GM12878 (cell line): ENCODE measurements at regions of chr2 and their contacts with region 1.

Region 1: GRCh38 chr2:26745609-26746327 is 18.3 kb upstream of the SLC35F6 start:
- DNase-seq: no peak
- ATAC-seq: peak; percentile 97
- H3K4me3 ChIP-seq: no peak overlapping the region
- H3K27ac ChIP-seq: no peak overlapping the region
- H3K4me1 ChIP-seq: no peaks in the 10 kb centered on the region; the same call in 1 of the 2 replicates
- H3K27me3 ChIP-seq: no peaks in the 10 kb centered on the region
- CTCF ChIP-seq: peak; percentile 90 to 94 (median 93)
- EP300 ChIP-seq: no peak
- POLR2A ChIP-seq: no peak
- RAD21 ChIP-seq: peak; percentile 92

Region 2: GRCh38 chr2:26503231-26503880 is 242.4 kb before region 1 on chr2:
- CTCF ChIA-PET with region 1: interaction called, 5 read pairs
- POLR2A ChIA-PET with region 1: no interaction called
- RAD21 ChIA-PET with region 1: no interaction called
- SMC1A ChIA-PET with region 1: no interaction called
- in situ Hi-C with region 1: no loop called
- intact Hi-C with region 1: loop called (anchors 10 kb)
- DNase-seq: no peak
- ATAC-seq: peak; percentile 98
- H3K4me3 ChIP-seq: peak overlapping the region; percentile 42; the same call in 1 of the 2 replicates
- H3K27ac ChIP-seq: no peak overlapping the region
- H3K4me1 ChIP-seq: no peaks in the 10 kb centered on the region; the same call in 1 of the 2 replicates
- H3K27me3 ChIP-seq: peaks cover 0 to 7% of the 10 kb centered on the region in 2 experiments; a peak in 3 of 4 replicates
- CTCF ChIP-seq: peak; percentile 75 to 88 (median 88)
- EP300 ChIP-seq: no peak
- POLR2A ChIP-seq: peak; percentile 48; the same call in 1 of the 2 replicates
- RAD21 ChIP-seq: peak; percentile 11; the same call in 1 of the 2 replicates

Region 3: DNA sequence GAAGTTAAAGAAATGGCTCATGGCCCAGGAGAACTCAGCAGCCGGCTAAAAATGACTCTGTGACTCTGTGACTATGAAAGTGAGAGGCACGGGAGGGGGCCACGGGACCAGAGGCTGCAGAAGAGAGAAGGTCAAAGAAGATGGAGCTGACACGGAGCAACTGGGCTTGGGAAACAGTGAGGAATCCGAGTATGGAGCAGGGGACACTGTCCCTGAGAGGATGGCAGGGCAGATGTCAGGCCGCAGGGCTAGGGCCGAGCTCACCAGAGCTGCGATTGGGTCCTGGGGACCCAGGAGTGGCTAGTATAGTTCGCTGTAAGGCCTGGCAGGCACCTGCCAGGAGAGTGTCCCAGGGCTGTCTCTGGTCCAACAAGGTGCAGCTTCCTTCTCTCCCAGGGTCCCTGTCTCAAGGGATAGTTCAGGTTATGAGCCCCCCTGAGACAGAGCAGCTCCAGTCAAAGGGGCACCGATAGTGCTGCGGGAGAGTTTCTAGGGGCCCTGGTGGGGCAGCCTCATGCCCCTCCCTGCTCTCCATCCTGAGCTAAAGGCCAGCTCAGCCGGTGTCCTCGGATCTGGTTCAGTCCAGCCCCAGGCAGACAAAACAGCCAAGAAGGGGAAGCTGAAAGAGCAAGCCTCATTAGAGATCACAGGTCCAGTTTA is 147.3 kb before region 1 on chr2:
- CTCF ChIA-PET with region 1: interaction called, 156 read pairs
- POLR2A ChIA-PET with region 1: no interaction called
- RAD21 ChIA-PET with region 1: interaction called, 11 read pairs
- SMC1A ChIA-PET with region 1: interaction called, 53 read pairs
- in situ Hi-C with region 1: loop called (anchors 5 kb)
- intact Hi-C with region 1: no loop called
- DNase-seq: no peak
- ATAC-seq: no peak
- H3K4me3 ChIP-seq: no peak overlapping the region
- H3K27ac ChIP-seq: no peak overlapping the region
- H3K4me1 ChIP-seq: no peaks in the 10 kb centered on the region
- H3K27me3 ChIP-seq: peaks cover 0 to 15% of the 10 kb centered on the region in 2 experiments
- CTCF ChIP-seq: no peak
- EP300 ChIP-seq: no peak
- POLR2A ChIP-seq: no peak
- RAD21 ChIP-seq: no peak

Region 4: DNA sequence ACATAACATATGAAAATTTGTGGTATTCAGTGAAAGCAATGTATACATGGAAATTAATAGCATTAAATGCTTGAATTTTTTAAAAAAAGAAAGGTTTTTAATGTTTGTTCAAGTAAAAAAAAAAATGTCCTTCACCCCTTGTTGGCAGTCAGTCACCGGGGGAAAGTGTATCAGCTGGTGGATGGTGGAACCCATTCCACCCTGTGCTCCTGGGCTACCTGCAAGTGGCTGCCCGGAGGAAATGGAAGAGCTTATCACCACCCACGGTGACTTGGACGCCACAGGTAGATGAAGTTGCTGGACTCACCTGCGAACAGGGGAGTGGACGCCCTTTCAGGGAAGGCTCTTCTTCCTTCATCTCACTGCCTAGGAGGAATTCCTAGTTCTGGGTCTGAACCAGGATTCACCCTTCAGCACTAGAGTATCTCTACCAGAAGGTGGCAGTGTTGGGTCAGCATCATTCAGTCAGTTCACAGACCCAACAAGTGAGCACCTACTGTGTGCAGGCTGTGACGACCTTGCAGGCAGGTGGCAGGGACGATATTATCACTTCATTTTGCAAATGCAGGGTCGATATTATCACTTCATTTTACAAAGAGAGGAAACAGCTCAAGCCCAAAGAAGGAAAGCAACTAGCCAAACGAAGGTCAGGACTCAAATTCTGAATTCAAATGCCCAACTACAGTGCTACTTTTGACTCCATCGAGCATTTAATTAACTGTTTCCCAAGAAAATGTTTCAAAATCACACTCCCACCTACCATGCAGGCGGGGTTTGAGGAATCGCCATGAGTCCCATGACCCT is 140.4 kb before region 1 on chr2:
- CTCF ChIA-PET with region 1: interaction called, 156 read pairs
- POLR2A ChIA-PET with region 1: no interaction called
- RAD21 ChIA-PET with region 1: interaction called, 11 read pairs
- SMC1A ChIA-PET with region 1: interaction called, 53 read pairs
- in situ Hi-C with region 1: loop called (anchors 5 kb)
- intact Hi-C with region 1: loop called (anchors 1 kb)
- DNase-seq: peak; percentile 8
- ATAC-seq: peak; percentile 74
- H3K4me3 ChIP-seq: no peak overlapping the region
- H3K27ac ChIP-seq: no peak overlapping the region
- H3K4me1 ChIP-seq: no peaks in the 10 kb centered on the region
- H3K27me3 ChIP-seq: no peaks in the 10 kb centered on the region; a peak in 2 of 4 replicates
- CTCF ChIP-seq: peak; percentile 71 to 78 (median 73); a peak in 5 of 6 replicates
- EP300 ChIP-seq: no peak
- POLR2A ChIP-seq: no peak
- RAD21 ChIP-seq: peak; percentile 66

Region 5: GRCh38 chr2:26757873-26758789 is 12.4 kb after region 1 on chr2:
- CTCF ChIA-PET with region 1: interaction called, 22 read pairs
- POLR2A ChIA-PET with region 1: no interaction called
- RAD21 ChIA-PET with region 1: no interaction called
- SMC1A ChIA-PET with region 1: interaction called, 12 read pairs
- in situ Hi-C with region 1: no loop called
- intact Hi-C with region 1: no loop called
- DNase-seq: peak; percentile 73
- ATAC-seq: peak; percentile 75
- H3K4me3 ChIP-seq: no peak overlapping the region
- H3K27ac ChIP-seq: peak overlapping the region; percentile 59
- H3K4me1 ChIP-seq: peaks cover 18% of the 10 kb centered on the region
- H3K27me3 ChIP-seq: no peaks in the 10 kb centered on the region
- CTCF ChIP-seq: no peak
- EP300 ChIP-seq: 0 out of 4 replicates have a peak, but pooled peaks of 1 of the 2 experiments have one; percentile 12
- POLR2A ChIP-seq: no peak
- RAD21 ChIP-seq: no peak